ENCODE measurements at regions of chr11 and their contacts with region 1.

Region 1: DNA sequence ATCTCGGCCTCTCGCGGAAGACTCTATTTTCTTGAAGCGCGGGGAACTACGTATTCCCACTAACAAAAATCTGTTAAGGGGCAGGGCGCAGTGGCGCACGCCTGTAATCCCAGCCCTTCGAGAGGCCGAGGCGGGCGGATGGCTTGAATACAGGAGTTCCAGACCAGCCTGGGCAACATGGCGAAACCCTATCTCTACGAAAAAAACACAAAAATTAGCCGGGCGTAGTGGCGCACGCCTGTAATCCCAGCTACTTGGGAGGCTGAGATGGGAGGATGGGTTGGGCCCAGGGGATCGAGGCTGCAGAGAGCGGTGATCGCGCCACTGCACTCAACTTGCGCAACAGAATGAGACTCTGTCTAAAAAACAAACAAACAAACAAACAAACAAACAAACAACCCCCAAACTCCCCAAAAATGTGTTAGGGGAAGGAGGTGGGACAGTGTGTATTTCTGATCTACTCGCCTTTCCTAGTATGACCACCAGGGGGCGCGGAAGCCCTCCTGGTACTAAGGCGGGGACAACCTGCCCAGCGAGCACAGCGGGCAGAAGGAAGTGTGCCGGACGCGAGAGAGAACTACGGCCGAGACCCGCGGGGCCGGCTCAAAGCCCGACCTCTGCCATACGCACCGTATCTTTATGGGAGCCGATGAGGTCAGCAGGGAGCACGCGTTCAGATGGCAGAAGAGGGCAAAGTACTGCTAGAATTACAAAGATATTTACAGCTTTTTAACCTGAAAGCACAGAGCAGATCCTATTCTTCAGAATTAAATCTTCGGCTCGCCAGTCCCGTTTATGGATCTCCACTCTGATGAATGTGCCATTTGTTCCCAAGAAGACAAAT is 1.3 kb upstream of the STX3 start:
- DNase-seq: no peak
- H3K4me3 ChIP-seq: peak overlapping the region; percentile 83
- CTCF ChIP-seq: peak; percentile 85

Region 2: GRCh38 chr11:59668950-59669610 is 84.8 kb before region 1 on chr11 and contains the start of gene PATL1:
- CTCF ChIA-PET with region 1: interaction called, 10 read pairs
- POLR2A ChIA-PET with region 1: interaction called, 6 read pairs
- DNase-seq: peak; percentile 81
- H3K4me3 ChIP-seq: peak within 1 kb of the TSS; percentile 81
- CTCF ChIP-seq: no peak

Region 3: DNA sequence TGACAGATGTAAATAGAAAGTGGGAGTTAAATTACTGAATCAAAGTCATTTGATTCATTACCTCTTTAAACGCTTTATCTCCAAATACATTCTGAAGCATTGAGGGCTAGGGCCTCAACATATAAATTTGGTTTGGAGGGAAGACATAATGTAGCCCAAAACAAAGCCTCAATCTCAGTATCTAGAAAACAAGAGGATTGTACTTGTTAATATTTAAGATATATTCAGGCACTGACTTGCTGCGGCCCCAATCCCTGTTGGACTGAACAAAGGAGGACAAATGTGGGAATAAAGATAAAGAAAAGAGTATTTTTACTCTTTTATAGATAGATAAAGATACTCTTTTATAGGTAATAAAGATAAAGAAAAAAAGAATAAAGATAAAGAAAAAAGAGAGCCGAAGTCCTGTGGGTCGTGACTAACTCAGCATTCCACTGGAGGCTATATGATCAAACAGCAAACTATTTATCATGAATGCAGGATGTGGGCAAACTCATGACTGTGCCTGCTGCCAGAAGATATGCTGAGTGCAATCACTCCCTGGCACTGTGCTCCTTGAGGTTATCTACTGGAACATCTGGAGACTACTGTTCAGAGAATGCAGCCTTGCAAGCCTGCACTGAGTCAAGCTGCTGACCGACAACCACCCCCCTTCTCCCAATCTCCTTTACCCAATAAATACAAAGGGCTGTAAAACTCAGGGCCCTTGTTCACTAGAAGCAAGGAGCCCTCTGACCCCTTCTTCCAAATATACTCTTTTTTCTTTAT is 47.2 kb before region 1 on chr11:
- CTCF ChIA-PET with region 1: interaction called, 14 read pairs
- POLR2A ChIA-PET with region 1: interaction called, 3 read pairs
- DNase-seq: peak; percentile 57
- H3K4me3 ChIP-seq: no peak overlapping the region
- CTCF ChIP-seq: no peak

Region 4: GRCh38 chr11:59767225-59767611 is 13.3 kb after region 1 on chr11:
- CTCF ChIA-PET with region 1: interaction called, 37 read pairs
- POLR2A ChIA-PET with region 1: interaction called, 4 read pairs
- DNase-seq: no peak
- H3K4me3 ChIP-seq: no peak overlapping the region
- CTCF ChIP-seq: no peak

Region 5: GRCh38 chr11:59787816-59788215 is 33.9 kb after region 1 on chr11:
- CTCF ChIA-PET with region 1: interaction called, 10 read pairs
- POLR2A ChIA-PET with region 1: no interaction called
- DNase-seq: peak; percentile 59
- H3K4me3 ChIP-seq: no peak overlapping the region
- CTCF ChIP-seq: no peak

Region 6: DNA sequence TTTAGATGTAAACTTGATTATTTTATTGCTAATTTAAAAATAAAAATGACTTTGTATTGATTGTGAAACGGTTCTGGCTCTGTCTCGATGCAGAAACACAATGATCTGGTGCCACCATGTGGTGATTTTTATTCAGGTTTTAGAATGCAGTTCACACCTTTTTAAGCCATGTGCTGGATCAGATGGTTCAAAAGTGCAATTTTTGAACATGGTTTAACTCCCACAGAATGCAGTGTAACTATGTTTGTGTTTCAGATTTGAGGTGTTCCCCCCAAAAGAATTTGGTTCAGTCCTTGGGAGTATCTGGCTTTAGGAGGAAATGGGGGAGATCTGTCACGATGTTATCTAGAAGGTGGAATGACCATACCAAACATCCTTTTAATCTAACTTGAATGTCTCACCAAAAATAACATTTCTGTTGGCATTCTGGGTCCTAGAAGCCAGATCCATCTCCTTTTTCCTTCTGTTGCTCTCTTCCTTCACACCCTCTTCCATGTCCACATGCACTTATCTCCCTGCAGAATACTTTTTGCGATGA is 48.8 kb after region 1 on chr11:
- CTCF ChIA-PET with region 1: interaction called, 216 read pairs
- POLR2A ChIA-PET with region 1: interaction called, 7 read pairs
- DNase-seq: no peak
- H3K4me3 ChIP-seq: no peak overlapping the region
- CTCF ChIP-seq: peak; percentile 37

Region 7: GRCh38 chr11:59810189-59810910 is 56.5 kb after region 1 on chr11 and contains the start of gene MRPL16:
- CTCF ChIA-PET with region 1: interaction called, 216 read pairs
- POLR2A ChIA-PET with region 1: interaction called, 7 read pairs
- DNase-seq: peak; percentile 36
- H3K4me3 ChIP-seq: peak within 1 kb of the TSS; percentile 99
- CTCF ChIP-seq: no peak

Region 8: GRCh38 chr11:60064111-60064510 is 310.2 kb after region 1 on chr11:
- CTCF ChIA-PET with region 1: no interaction called
- POLR2A ChIA-PET with region 1: no interaction called
- DNase-seq: no peak
- H3K4me3 ChIP-seq: no peak overlapping the region
- CTCF ChIP-seq: no peak